Activated CD4-positive, alpha-beta T cell treated with anti-CD3 and anti-CD28 coated beads, Interleukin-2, amount 10 ng/mL, durations not matched to agents 24 days and 14 days (primary cell): ENCODE measurements at regions of chr4 and their contacts with region 1.

Region 1: DNA sequence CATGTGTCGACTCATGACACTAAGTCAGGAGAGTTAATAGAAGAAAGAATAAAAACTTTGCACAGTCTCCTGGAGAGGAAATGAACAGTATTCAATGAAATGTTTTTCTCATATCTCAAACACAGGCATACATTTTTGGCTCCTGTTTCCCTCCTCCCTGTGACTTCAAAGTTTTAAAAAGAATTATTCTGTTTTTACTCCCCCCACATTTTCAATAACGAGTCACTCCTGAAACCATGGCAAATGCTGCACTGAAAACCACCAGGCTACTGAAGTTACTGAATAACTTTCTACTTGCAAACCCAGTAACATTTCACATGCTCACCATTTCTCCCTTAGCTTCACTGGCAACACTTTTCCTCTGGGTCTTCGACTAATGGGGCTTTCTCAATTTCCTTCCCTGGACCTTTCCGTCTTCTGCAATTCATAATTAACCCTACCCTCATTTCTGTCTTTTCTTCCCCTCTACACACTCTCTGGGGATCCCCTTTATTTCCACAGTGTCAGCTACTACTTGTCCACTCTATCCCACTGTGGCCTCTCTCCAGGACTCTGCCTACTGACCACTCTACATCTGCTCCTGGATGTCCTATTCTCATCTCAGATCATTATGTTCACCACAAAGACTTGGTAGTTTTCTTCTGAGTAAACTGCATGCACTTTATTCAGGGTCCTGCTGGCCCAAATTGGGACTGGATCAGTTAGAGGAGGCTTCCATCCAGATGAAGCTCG is 225.8 kb upstream of the ETNPPL start:
- DNase-seq: no peak
- H3K4me3 Mint-ChIP-seq: no peak overlapping the region
- H3K27ac Mint-ChIP-seq: no peak overlapping the region
- H3K4me1 Mint-ChIP-seq: no peaks in the 10 kb centered on the region
- H3K27me3 Mint-ChIP-seq: no peaks in the 10 kb centered on the region

Region 2: GRCh38 chr4:108762559-108763225 is 225.9 kb before region 1 on chr4 and contains the start of gene ETNPPL:
- intact Hi-C with region 1: no loop called
- DNase-seq: peak; percentile 71
- H3K4me3 Mint-ChIP-seq: peak within 1 kb of the TSS; percentile 87
- H3K27ac Mint-ChIP-seq: peak within 1 kb of the TSS; percentile 10
- H3K4me1 Mint-ChIP-seq: peaks cover 11% of the 10 kb centered on the region
- H3K27me3 Mint-ChIP-seq: peaks cover 53% of the 10 kb centered on the region
- total RNA-seq, gene ETNPPL: not detected in 2 replicates

Region 3: GRCh38 chr4:108959491-108959890 is 29.1 kb before region 1 on chr4:
- intact Hi-C with region 1: no loop called
- DNase-seq: no peak
- H3K4me3 Mint-ChIP-seq: no peak overlapping the region
- H3K27ac Mint-ChIP-seq: no peak overlapping the region
- H3K4me1 Mint-ChIP-seq: no peaks in the 10 kb centered on the region
- H3K27me3 Mint-ChIP-seq: peaks cover 10% of the 10 kb centered on the region

Region 4: GRCh38 chr4:108972613-108973283 is 15.9 kb before region 1 on chr4:
- intact Hi-C with region 1: loop called (anchors 2 kb)
- DNase-seq: peak; percentile 77
- H3K4me3 Mint-ChIP-seq: peak overlapping the region; percentile 63
- H3K27ac Mint-ChIP-seq: peak overlapping the region; percentile 86
- H3K4me1 Mint-ChIP-seq: peaks cover 31% of the 10 kb centered on the region
- H3K27me3 Mint-ChIP-seq: no peaks in the 10 kb centered on the region

Region 5: GRCh38 chr4:109005523-109005922 is 16.9 kb after region 1 on chr4:
- intact Hi-C with region 1: no loop called
- DNase-seq: no peak
- H3K4me3 Mint-ChIP-seq: peak overlapping the region; percentile 0
- H3K27ac Mint-ChIP-seq: no peak overlapping the region
- H3K4me1 Mint-ChIP-seq: peaks cover 10% of the 10 kb centered on the region
- H3K27me3 Mint-ChIP-seq: no peaks in the 10 kb centered on the region